WTC11 (cell line): ENCODE measurements at regions of chr19 and their contacts with region 1.

Region 1: GRCh38 chr19:20077791-20078463 is at the start of gene ZNF90:
- DNase-seq: peak; percentile 95
- ATAC-seq: peak; percentile 92
- H3K4me3 Mint-ChIP-seq: peak within 1 kb of the TSS; percentile 98
- H3K27ac Mint-ChIP-seq: peak within 1 kb of the TSS; percentile 97
- H3K4me1 Mint-ChIP-seq: peaks cover 42% of the 10 kb centered on the region
- H3K27me3 Mint-ChIP-seq: no peaks in the 10 kb centered on the region
- CTCF ChIP-seq: no peak
- total RNA-seq, gene ZNF90: 112 to 114 TPM (median 114 TPM) in 3 replicates

Region 2: DNA sequence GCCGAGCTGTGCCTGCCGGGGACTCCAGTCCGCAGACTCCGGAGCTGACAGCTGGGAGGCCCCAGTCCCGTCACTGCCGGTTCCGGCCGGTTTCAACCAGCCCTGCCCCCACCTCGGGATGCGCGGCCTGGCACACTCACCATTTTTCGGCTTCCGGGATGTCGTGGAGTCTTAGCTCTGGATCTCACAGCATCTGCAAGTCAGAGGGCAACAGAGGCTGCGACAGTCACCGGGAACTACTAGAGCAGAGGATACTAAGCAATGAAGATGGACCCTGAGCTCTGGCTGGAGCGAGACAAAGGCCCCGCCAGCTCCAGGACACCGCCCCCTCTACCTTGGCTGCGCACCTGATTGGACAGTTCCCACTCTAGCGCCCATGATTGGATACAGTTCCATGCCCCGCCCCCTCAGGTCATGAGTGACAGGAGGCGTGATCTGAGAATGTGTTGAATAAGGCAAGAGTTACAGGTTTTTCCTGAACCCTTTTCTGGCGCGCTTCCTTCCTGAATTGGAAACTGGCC is 38.7 kb before region 1 on chr19 and contains the start of gene ZNF682:
- CTCF ChIA-PET with region 1: no interaction called
- POLR2A ChIA-PET with region 1: interaction called, 25 read pairs
- DNase-seq: peak; percentile 99
- ATAC-seq: peak; percentile 100
- H3K4me3 Mint-ChIP-seq: peak within 1 kb of the TSS; percentile 91
- H3K27ac Mint-ChIP-seq: peak within 1 kb of the TSS; percentile 98
- H3K4me1 Mint-ChIP-seq: peaks cover 17% of the 10 kb centered on the region
- H3K27me3 Mint-ChIP-seq: no peaks in the 10 kb centered on the region
- CTCF ChIP-seq: no peak
- total RNA-seq, gene ZNF682: 20.5 to 25.4 TPM (median 20.8 TPM) in 3 replicates

Region 3: DNA sequence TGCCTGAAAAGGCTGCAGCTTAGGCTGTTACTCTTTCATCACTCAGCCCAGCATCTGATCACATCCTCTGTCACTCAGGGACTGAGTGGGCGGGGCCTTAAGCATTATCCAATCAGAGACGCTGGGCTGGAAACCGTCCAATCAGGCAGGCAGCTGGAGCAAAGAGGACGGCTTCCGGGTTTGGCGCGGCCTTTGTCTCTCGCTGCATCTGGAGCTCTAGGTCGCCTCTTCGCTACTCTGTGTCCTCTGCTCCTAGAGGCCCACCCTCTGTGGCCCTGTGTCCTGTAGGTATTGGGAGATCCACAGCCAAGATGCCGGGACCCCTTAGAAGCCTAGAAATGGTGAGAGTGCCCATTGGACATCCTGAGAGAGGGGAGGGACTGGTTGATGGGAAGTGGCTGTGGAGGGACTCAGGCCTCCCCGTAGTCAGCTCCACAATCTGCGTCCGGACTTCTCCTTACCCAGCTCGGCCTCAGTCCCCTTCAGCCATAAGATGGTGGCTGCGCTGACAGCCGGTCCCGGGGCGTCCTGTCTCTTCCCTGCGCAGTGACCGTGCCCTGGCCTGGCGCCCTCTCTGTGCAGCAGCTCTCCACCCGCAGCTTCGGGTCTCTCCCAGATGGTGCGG is 89.2 kb after region 1 on chr19 and contains the start of gene ZNF486:
- CTCF ChIA-PET with region 1: interaction called, 3 read pairs
- POLR2A ChIA-PET with region 1: interaction called, 17 read pairs
- DNase-seq: peak; percentile 98
- ATAC-seq: peak; percentile 97
- H3K4me3 Mint-ChIP-seq: peak within 1 kb of the TSS; percentile 98
- H3K27ac Mint-ChIP-seq: peak within 1 kb of the TSS; percentile 98
- H3K4me1 Mint-ChIP-seq: peaks cover 51% of the 10 kb centered on the region
- H3K27me3 Mint-ChIP-seq: no peaks in the 10 kb centered on the region
- CTCF ChIP-seq: no peak
- total RNA-seq, gene ZNF486: 20.7 to 22.3 TPM (median 20.8 TPM) in 3 replicates